T-cell (primary cell): ENCODE measurements at regions of chr2 and their contacts with region 1.

Region 1: GRCh38 chr2:152012697-152013096 is 86.1 kb downstream of the CACNB4 start:
- DNase-seq: no peak
- ATAC-seq: no peak
- H3K4me3 ChIP-seq: no peak overlapping the region
- H3K4me3 Mint-ChIP-seq: no peak overlapping the region
- H3K27ac ChIP-seq: no peak overlapping the region
- H3K27ac Mint-ChIP-seq: no peak overlapping the region
- H3K4me1 ChIP-seq: no peaks in the 10 kb centered on the region
- H3K4me1 Mint-ChIP-seq: no peaks in the 10 kb centered on the region
- H3K27me3 ChIP-seq: peaks cover 0 to 7% of the 10 kb centered on the region in 2 experiments
- H3K27me3 Mint-ChIP-seq: peaks cover 10 to 21% of the 10 kb centered on the region in 2 donors

Region 2: DNA sequence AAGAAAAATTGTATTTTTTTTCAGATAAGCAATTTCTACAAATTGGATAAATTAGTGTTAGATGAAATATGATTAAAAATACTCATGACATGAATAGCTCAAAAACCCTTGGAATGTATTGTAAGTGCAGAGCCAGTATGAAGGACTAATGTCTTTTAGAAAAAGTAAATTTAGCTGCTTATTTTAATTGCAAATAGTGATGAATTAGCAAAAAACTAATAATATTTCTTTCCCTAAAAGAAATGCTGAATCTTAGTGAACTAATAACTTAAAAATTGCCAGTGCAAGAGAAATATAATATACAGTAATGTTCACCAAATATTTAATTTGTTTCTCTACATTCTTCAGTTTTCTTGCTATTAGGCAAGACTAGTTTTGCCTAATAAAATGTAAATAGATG is 1597.7 kb before region 1 on chr2:
- CTCF ChIA-PET with region 1: interaction called in 1 of 2 experiments, 16 read pairs
- POLR2A ChIA-PET with region 1: no interaction called
- DNase-seq: no peak
- ATAC-seq: no peak
- H3K4me3 ChIP-seq: no peak overlapping the region
- H3K4me3 Mint-ChIP-seq: no peak overlapping the region
- H3K27ac ChIP-seq: no peak overlapping the region
- H3K27ac Mint-ChIP-seq: no peak overlapping the region
- H3K4me1 ChIP-seq: no peaks in the 10 kb centered on the region
- H3K4me1 Mint-ChIP-seq: no peaks in the 10 kb centered on the region
- H3K27me3 ChIP-seq: no peaks in the 10 kb centered on the region
- H3K27me3 Mint-ChIP-seq: no peaks in the 10 kb centered on the region